Left lung (tissue), 14 donors: ENCODE measurements at regions of chr4 and their contacts with region 1.

Region 1: DNA sequence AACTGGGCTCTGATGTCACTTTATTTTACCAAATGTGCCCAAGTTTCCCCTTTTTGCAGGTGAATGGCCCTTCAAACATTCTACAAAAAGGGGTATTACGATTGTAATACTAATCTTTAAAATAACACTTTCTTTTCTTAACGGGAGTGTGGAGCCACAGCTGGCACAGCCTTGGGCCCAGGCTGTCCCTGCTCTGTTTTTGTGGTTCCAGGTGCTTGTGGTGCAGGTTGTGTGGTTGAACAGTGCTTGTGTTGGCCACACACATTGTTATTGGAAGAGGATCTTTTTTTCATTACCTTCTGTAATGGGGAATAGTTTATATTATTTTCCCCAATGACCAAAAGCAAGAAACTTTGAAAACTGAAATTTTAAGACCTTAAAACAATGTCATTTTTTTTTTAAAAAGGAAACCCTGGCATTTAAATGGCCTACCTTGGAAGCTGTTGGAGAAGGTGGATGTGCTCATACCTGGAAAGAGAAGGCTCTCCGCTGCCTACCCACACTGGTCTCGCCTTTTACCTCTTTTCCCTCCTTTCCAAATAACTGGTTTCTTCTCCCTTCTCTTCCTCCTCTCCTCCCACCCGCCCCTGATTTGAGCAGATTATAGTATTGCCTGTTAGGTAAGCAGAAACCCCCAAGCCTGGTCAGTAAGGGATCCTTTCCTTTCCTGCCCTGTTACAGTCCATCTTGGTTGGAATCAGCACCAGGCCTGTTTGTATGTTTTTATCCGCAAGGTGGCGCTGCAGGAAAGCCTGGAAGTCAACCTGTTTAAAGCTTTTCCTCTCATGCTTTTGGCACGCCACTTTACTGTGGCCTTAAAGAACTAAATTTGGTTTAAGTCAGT is 28.6 kb downstream of the HADH start:
- DNase-seq: peak in 3 of 4 donors; percentile 65 to 81 (median 68)
- ATAC-seq: peak; percentile 92
- H3K4me3 ChIP-seq: no peak overlapping the region
- H3K27ac ChIP-seq: no peak overlapping the region
- H3K4me1 ChIP-seq: no peaks in the 10 kb centered on the region
- H3K27me3 ChIP-seq: no peaks in the 10 kb centered on the region
- CTCF ChIP-seq: peak; percentile 78 to 82

Region 2: DNA sequence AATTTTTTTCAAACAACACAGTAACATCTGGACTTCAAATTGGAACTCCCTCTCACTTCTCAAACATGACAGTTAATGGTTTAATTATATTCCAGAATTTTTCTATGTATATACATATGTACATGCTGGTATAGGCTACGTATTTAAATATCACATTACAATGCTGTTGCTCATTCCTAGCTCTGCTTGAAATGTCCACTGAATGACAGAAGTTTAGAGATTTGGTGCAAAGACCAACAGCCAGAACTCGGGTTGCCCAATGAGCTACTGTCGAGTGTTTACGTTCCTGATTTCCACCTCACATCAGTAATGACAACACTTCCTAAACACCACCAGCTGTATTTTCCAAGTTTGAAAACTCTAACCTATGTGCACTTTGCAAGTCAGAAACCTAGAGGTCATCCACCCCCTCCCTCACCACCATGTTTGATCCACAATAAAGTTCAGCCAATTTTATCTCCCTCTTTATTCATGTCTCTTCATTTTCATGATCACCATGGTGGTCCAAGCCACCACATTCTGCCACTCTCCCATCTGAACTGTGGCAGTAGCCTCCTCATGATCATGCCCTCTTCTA is 552.8 kb after region 1 on chr4:
- intact Hi-C with region 1: loop called in 1 of 2 experiments (anchors 5 kb)
- DNase-seq: no peak
- ATAC-seq: peak; percentile 32
- H3K4me3 ChIP-seq: no peak overlapping the region
- H3K27ac ChIP-seq: no peak overlapping the region
- H3K4me1 ChIP-seq: no peaks in the 10 kb centered on the region
- H3K27me3 ChIP-seq: peaks cover 0 to 5% of the 10 kb centered on the region in 2 donors
- CTCF ChIP-seq: no peak